ENCODE measurements at regions of chr15 and their contacts with region 1.

Region 1: GRCh38 chr15:68304589-68305337 is 27.2 kb downstream of the FEM1B start:
- H3K4me3 ChIP-seq: no peak overlapping the region
- H3K27ac ChIP-seq: no peak overlapping the region
- H3K4me1 ChIP-seq: no peaks in the 10 kb centered on the region
- CTCF ChIP-seq: no peak

Region 2: DNA sequence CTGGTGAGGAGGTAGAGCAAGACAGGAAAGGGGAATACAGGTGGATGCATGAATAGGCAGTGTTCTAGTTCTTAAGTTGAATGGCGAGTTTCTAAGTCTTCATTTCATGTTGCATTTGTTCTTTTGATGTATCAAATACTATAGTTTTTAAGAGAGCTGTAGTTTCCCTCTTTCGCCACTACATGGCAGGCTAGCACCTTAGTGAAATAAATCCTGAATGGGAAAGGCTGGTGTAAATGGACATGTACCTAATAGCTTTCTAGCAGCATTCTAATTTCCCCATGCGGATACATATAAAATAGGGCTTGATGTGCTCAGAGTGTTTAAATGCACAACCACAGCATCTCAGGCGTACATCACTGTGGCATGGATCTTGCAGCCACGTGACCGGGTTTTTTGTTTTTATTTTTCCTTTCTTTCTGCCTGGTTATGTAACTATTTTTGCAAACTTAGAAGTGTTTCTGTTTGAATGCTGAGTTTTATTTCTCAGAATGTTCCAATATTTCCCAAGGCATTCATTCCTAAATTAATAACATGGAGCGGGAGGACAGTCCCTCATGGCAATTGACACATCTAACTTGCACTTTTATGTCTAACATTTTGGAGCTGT is 51.7 kb before region 1 on chr15:
- CTCF ChIA-PET with region 1: interaction called, 158 read pairs
- POLR2A ChIA-PET with region 1: interaction called, 9 read pairs
- H3K4me3 ChIP-seq: no peak overlapping the region
- H3K27ac ChIP-seq: no peak overlapping the region
- H3K4me1 ChIP-seq: 0 out of 2 replicates have a peak, but pooled peaks cover 2% of the 10 kb centered on the region
- CTCF ChIP-seq: peak; percentile 80

Region 3: DNA sequence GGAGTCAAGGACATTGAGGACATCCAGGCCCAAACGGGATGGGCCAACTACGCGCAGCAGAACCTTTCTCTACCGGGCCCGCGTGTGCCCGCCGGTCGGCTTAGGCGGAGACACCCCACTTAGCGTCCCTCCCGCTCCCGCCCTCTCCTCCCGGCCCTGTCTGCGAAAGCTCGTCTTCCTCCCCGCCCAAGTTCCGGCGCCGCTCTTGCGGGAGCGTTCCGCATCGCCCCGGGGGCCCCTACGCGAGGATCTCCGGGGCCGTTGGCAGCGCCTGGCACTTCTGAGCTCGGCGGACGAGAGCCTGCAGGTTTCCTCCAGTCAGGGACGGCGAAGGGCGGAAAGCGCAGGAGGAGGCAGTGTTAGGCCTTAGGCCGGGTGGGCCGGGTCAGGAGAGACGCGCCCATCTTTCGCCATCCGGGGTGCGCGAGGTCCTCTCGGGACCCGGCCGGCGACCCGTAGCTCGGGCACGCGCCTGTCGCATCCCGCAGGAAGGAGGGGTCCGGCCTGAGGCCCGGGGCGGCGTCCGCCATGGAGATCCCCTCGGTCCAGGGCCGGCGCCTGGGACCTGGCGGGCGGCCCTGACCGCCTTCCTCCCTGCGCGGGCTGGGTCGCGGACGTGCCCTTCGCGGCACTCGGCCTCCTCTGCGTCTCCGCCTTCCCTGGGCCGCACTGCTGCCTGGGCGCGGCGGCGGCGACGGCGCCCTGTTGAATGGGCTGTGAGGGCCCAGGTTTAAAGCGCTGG is 27.0 kb before region 1 on chr15 and contains the start of gene FEM1B:
- CTCF ChIA-PET with region 1: interaction called, 25 read pairs
- POLR2A ChIA-PET with region 1: interaction called, 6 read pairs
- H3K4me3 ChIP-seq: peak within 1 kb of the TSS; percentile 95
- H3K27ac ChIP-seq: peak within 1 kb of the TSS; percentile 97
- H3K4me1 ChIP-seq: peaks cover 13% of the 10 kb centered on the region; the same call in 1 of the 2 replicates
- CTCF ChIP-seq: no peak

Region 4: DNA sequence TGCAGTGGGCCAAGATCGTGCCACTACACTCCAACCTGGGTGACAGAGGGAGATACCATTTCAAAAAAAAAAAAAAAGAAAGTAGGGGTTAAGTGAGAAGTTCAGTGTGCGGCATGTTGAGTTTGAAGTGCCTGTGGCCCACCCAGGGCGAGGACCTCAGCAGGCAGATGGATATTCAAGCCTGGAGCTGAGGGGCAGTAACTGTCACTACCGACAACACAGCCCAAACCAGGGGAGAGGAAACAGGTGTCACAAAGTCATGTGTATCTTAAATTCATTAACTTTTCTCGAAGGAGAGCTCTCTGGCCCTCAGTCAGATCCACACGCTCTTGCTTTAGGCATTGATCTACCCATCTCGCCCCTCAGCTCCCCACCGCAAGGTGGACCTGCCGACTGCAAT is 18.0 kb after region 1 on chr15:
- CTCF ChIA-PET with region 1: interaction called, 10 read pairs
- POLR2A ChIA-PET with region 1: no interaction called
- H3K4me3 ChIP-seq: no peak overlapping the region
- H3K27ac ChIP-seq: no peak overlapping the region
- H3K4me1 ChIP-seq: no peaks in the 10 kb centered on the region
- CTCF ChIP-seq: no peak

Region 5: GRCh38 chr15:68365140-68365745 is 60.5 kb after region 1 on chr15:
- CTCF ChIA-PET with region 1: interaction called, 13 read pairs
- POLR2A ChIA-PET with region 1: interaction called, 3 read pairs
- H3K4me3 ChIP-seq: no peak overlapping the region
- H3K27ac ChIP-seq: no peak overlapping the region
- H3K4me1 ChIP-seq: peaks cover 3% of the 10 kb centered on the region; the same call in 1 of the 2 replicates
- CTCF ChIP-seq: no peak

Region 6: GRCh38 chr15:68536331-68537095 is 231.8 kb after region 1 on chr15:
- CTCF ChIA-PET with region 1: interaction called, 23 read pairs
- POLR2A ChIA-PET with region 1: no interaction called
- H3K4me3 ChIP-seq: no peak overlapping the region
- H3K27ac ChIP-seq: no peak overlapping the region
- H3K4me1 ChIP-seq: no peaks in the 10 kb centered on the region
- CTCF ChIP-seq: no peak

Measured in HEK293 (cell line).